ENCODE measurements at regions of chr12 and their contacts with region 1.

Region 1: GRCh38 chr12:124422570-124423523 is 128.0 kb downstream of the RFLNA start:
- DNase-seq: peak; percentile 93

Region 2: GRCh38 chr12:123928274-123928865 is 494.5 kb before region 1 on chr12:
- intact Hi-C with region 1: no loop called
- DNase-seq: no peak

Region 3: DNA sequence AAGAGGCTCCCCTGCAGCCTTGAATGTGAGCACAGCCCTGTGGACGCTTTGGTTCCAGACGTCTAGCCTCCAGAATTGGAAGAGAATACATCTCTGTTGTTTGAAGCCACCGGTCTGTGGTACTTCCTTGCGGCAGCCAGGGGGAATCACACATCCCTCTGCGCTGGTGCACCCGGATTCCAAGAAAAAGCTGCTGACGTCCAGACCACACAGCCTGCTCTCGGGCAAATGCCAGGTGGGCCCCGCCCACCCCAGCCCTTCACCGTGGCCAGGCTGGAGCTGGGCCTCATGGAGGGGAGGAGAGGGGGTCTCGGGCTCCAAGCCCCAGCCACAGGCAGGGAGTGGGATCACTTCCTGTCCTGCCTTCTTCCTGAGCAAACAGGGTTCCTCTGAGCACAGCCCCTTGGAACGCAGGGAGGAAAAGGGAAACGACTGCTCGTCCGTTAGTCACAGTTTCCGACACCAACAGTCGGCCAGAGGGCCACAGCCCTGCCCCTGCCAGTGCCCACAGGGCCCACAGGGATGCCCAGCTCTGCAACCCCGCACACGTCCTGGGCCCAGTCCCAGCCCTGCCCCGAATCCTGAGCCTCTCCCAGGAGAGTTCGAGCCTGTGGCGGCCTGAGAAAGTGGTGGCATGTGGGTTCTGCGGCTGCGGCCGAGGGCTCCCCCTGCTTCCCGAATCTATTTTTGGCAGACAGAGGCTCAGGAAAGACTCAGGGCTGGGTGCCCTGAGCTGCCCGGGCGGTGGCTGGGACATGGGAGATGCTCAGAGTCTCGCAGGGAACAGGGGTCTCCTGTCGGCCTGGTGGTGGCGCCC is 42.7 kb before region 1 on chr12:
- intact Hi-C with region 1: loop called (anchors 2 kb)
- DNase-seq: no peak

Region 4: GRCh38 chr12:124512667-124513296 is 89.9 kb after region 1 on chr12:
- intact Hi-C with region 1: loop called (anchors 2 kb)
- DNase-seq: peak; percentile 92

Measured in cardiac septum (tissue), 1 donor.